ENCODE measurements at regions of chr2 and their contacts with region 1.

Region 1: GRCh38 chr2:108583903-108584520 is 49.7 kb downstream of the LIMS1 start:
- DNase-seq: peak in 4 of 5 donors; percentile 45 to 77 (median 57)
- H3K4me3 ChIP-seq: no peak overlapping the region
- H3K27ac ChIP-seq: no peak overlapping the region
- H3K4me1 ChIP-seq: peaks cover 12% of the 10 kb centered on the region
- H3K27me3 ChIP-seq: no peaks in the 10 kb centered on the region
- CTCF ChIP-seq: peak in 2 of 3 donors; percentile 62 to 72
- EP300 ChIP-seq: no peak
- POLR2A ChIP-seq: no peak

Region 2: GRCh38 chr2:108194409-108195132 is 389.4 kb before region 1 on chr2:
- intact Hi-C with region 1: loop called in 1 of 4 experiments (anchors 10 kb)
- DNase-seq: no peak
- H3K4me3 ChIP-seq: no peak overlapping the region
- H3K27ac ChIP-seq: no peak overlapping the region
- H3K4me1 ChIP-seq: no peaks in the 10 kb centered on the region
- H3K27me3 ChIP-seq: no peaks in the 10 kb centered on the region
- CTCF ChIP-seq: no peak
- EP300 ChIP-seq: no peak
- POLR2A ChIP-seq: no peak

Region 3: GRCh38 chr2:108351889-108352288 is 232.1 kb before region 1 on chr2:
- intact Hi-C with region 1: loop called in 2 of 4 experiments (anchors 10 kb)
- DNase-seq: no peak
- H3K4me3 ChIP-seq: no peak overlapping the region
- H3K27ac ChIP-seq: no peak overlapping the region
- H3K4me1 ChIP-seq: no peaks in the 10 kb centered on the region
- H3K27me3 ChIP-seq: no peaks in the 10 kb centered on the region
- CTCF ChIP-seq: no peak
- EP300 ChIP-seq: no peak
- POLR2A ChIP-seq: no peak

Region 4: GRCh38 chr2:108533832-108534583 is 50.0 kb before region 1 on chr2 and contains the start of gene LIMS1:
- intact Hi-C with region 1: loop called in 1 of 4 experiments (anchors 10 kb)
- DNase-seq: peak; percentile 93 to 96 (median 93)
- H3K4me3 ChIP-seq: peak within 1 kb of the TSS; percentile 73
- H3K27ac ChIP-seq: peak within 1 kb of the TSS; percentile 76 to 93
- H3K4me1 ChIP-seq: no peaks in the 10 kb centered on the region
- H3K27me3 ChIP-seq: no peaks in the 10 kb centered on the region
- CTCF ChIP-seq: peak in 1 of 3 donors; percentile 9
- EP300 ChIP-seq: no peak
- POLR2A ChIP-seq: peak; percentile 82
- total RNA-seq, gene LIMS1: 36.2 to 91.1 (median 52.4) TPM

Region 5: GRCh38 chr2:108701208-108701607 is 117.2 kb after region 1 on chr2:
- intact Hi-C with region 1: no loop called
- DNase-seq: no peak
- H3K4me3 ChIP-seq: no peak overlapping the region
- H3K27ac ChIP-seq: no peak overlapping the region
- H3K4me1 ChIP-seq: no peaks in the 10 kb centered on the region
- H3K27me3 ChIP-seq: no peaks in the 10 kb centered on the region
- CTCF ChIP-seq: no peak
- EP300 ChIP-seq: no peak
- POLR2A ChIP-seq: no peak

Region 6: DNA sequence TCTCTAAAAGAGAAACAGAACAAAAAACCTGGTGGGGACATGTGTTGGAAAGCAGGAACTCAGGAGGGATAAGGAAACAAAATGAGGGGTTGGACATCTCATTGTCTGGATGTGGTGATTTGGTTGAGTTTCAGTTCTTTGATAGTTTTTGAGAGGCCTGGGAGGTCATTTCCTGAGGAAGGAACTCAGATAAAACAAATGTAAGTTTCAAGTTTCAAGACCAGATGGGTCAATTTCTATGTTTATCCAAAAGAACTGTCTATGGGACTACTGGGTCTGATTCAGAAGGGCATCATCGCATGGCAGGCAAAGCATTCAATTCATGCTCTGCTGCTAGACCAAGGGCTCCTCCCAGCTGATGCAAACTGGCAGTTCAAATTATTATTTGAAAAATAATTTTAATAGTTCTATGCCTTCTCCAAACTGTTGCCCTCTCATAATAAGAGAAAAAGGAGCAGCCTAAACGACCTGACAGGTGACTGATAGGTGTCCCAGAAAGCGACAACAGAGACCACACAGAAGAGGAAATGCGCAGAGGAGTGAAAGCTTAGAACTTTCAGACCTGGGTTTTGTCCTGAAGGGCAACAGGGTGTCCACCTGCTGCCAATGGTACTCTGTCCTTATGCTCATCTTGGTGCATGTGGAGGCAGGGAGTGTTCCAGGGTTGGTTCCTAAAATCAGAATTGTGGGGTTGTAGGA is 505.7 kb after region 1 on chr2:
- intact Hi-C with region 1: no loop called
- DNase-seq: no peak
- H3K4me3 ChIP-seq: no peak overlapping the region
- H3K27ac ChIP-seq: no peak overlapping the region
- H3K4me1 ChIP-seq: no peaks in the 10 kb centered on the region
- H3K27me3 ChIP-seq: no peaks in the 10 kb centered on the region
- CTCF ChIP-seq: no peak
- EP300 ChIP-seq: no peak
- POLR2A ChIP-seq: no peak

Measured in ovary (tissue), 10 donors.